AG04450 (cell line): ENCODE measurements at regions of chr17 and their contacts with region 1.

Region 1: GRCh38 chr17:67336859-67337258 is 29.5 kb downstream of the PSMD12 start:
- DNase-seq: no peak
- H3K4me3 ChIP-seq: no peak overlapping the region
- H3K27ac ChIP-seq: no peak overlapping the region
- H3K27me3 ChIP-seq: no peaks in the 10 kb centered on the region
- CTCF ChIP-seq: no peak

Region 2: GRCh38 chr17:67211742-67212141 is 125.1 kb before region 1 on chr17:
- CTCF ChIA-PET with region 1: no interaction called
- POLR2A ChIA-PET with region 1: interaction called, 13 read pairs
- DNase-seq: no peak
- H3K4me3 ChIP-seq: no peak overlapping the region
- H3K27ac ChIP-seq: no peak overlapping the region
- H3K27me3 ChIP-seq: no peaks in the 10 kb centered on the region
- CTCF ChIP-seq: no peak